A673 (cell line): ENCODE measurements at regions of chr3 and their contacts with region 1.

Region 1: GRCh38 chr3:112111785-112112402 is 21.2 kb downstream of the GCSAM start:
- DNase-seq: peak; percentile 82
- H3K4me3 ChIP-seq: no peak overlapping the region
- H3K27ac ChIP-seq: no peak overlapping the region
- H3K4me1 ChIP-seq: no peaks in the 10 kb centered on the region
- H3K27me3 ChIP-seq: no peaks in the 10 kb centered on the region
- CTCF ChIP-seq: peak; percentile 89

Region 2: GRCh38 chr3:112293368-112294321 is 181.8 kb after region 1 on chr3 and contains the start of gene SLC9C1:
- CTCF ChIA-PET with region 1: interaction called, 13 read pairs
- POLR2A ChIA-PET with region 1: no interaction called
- intact Hi-C with region 1: no loop called
- DNase-seq: peak; percentile 77
- H3K4me3 ChIP-seq: peak within 1 kb of the TSS; percentile 12
- H3K27ac ChIP-seq: no peak within 1 kb of the TSS
- H3K4me1 ChIP-seq: peaks cover 4% of the 10 kb centered on the region
- H3K27me3 ChIP-seq: no peaks in the 10 kb centered on the region
- CTCF ChIP-seq: peak; percentile 76
- total RNA-seq, gene SLC9C1: not detected in 2 replicates